ENCODE measurements at regions of chr17 and their contacts with region 1.

Region 1: GRCh38 chr17:50575581-50576210 is 15.2 kb downstream of the CACNA1G start:
- DNase-seq: peak in 1 of 4 donors; percentile 44
- ATAC-seq: peak; percentile 8
- H3K4me3 ChIP-seq: no peak overlapping the region
- H3K27ac ChIP-seq: no peak overlapping the region
- H3K4me1 ChIP-seq: peaks cover 7% of the 10 kb centered on the region
- H3K27me3 ChIP-seq: no peaks in the 10 kb centered on the region
- CTCF ChIP-seq: peak in 1 of 7 experiments; percentile 25
- POLR2A ChIP-seq: no peak

Region 2: GRCh38 chr17:50414808-50415207 is 160.9 kb before region 1 on chr17:
- intact Hi-C with region 1: no loop called
- DNase-seq: no peak
- ATAC-seq: no peak
- H3K4me3 ChIP-seq: no peak overlapping the region
- H3K27ac ChIP-seq: no peak overlapping the region
- H3K4me1 ChIP-seq: no peaks in the 10 kb centered on the region
- H3K27me3 ChIP-seq: no peaks in the 10 kb centered on the region
- CTCF ChIP-seq: no peak
- POLR2A ChIP-seq: no peak

Region 3: GRCh38 chr17:50613007-50613992 is 37.6 kb after region 1 on chr17:
- intact Hi-C with region 1: loop called (anchors 5 kb)
- DNase-seq: no peak
- ATAC-seq: no peak
- H3K4me3 ChIP-seq: no peak overlapping the region
- H3K27ac ChIP-seq: no peak overlapping the region
- H3K4me1 ChIP-seq: no peaks in the 10 kb centered on the region
- H3K27me3 ChIP-seq: no peaks in the 10 kb centered on the region
- CTCF ChIP-seq: no peak
- POLR2A ChIP-seq: no peak

Measured in body of pancreas (tissue), 4 donors.